ENCODE measurements at regions of chr10 and their contacts with region 1.

Region 1: GRCh38 chr10:96129387-96130325 is at the start of gene ZNF518A:
- DNase-seq: peak; percentile 96
- H3K4me3 Mint-ChIP-seq: peak within 1 kb of the TSS; percentile 94
- H3K27ac Mint-ChIP-seq: peak within 1 kb of the TSS; percentile 98
- H3K4me1 Mint-ChIP-seq: peaks cover 23% of the 10 kb centered on the region
- H3K27me3 Mint-ChIP-seq: peaks cover 28% of the 10 kb centered on the region
- total RNA-seq, gene ZNF518A: 16.9 and 17.2 TPM in 2 replicates

Region 2: GRCh38 chr10:95907456-95908253 is 222.0 kb before region 1 on chr10 and contains the start of gene CC2D2B:
- intact Hi-C with region 1: loop called (anchors 5 kb)
- DNase-seq: peak; percentile 91
- H3K4me3 Mint-ChIP-seq: peak within 1 kb of the TSS; percentile 93
- H3K27ac Mint-ChIP-seq: peak within 1 kb of the TSS; percentile 94
- H3K4me1 Mint-ChIP-seq: peaks cover 11% of the 10 kb centered on the region
- H3K27me3 Mint-ChIP-seq: peaks cover 14% of the 10 kb centered on the region
- total RNA-seq, gene CC2D2B: 0.26 TPM in 1 of 2 replicates, not detected in the other

Region 3: DNA sequence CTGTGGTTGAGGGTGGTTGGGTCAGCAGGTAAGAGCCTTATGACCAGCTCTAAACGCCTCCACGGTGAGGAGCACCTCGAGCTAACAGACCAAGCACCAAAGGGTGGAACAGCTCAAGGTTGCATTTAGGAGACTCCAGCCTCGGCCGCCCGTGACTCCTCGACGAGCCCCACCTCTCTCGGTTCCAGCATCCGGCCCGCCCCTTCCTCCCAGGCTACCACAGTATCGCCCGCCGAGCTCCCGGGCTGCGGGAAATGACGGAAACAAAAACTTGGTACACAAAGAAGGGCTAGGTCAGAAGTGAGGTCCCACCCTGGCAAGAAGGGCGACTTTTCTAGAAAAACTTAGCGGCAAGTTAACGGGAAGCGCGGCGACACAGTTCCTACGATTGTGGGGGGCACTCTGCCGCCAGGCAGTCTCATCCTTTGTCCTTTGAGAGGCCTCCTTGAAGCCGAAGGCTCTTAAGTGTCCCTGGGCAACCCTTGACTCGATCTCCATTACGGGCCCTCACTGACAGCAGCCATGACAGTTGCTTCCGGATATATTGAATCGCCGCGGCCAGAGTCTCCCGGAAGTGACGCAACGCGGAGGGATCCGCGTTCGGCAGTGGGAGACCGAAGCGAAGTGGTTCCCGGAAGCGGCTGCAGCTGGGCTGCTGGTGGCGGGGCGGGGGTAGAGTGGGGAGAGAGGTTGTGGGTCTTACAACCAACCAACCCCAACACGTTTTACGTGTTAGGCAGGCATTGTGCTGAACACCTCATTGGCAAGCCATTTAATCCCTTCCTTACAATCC is 39.8 kb before region 1 on chr10:
- intact Hi-C with region 1: loop called (anchors 1 kb)
- DNase-seq: peak; percentile 97
- H3K4me3 Mint-ChIP-seq: peak overlapping the region; percentile 95
- H3K27ac Mint-ChIP-seq: peak overlapping the region; percentile 99
- H3K4me1 Mint-ChIP-seq: peaks cover 12% of the 10 kb centered on the region
- H3K27me3 Mint-ChIP-seq: peaks cover 17% of the 10 kb centered on the region

Measured in activated CD4-positive, alpha-beta T cell treated with anti-CD3 and anti-CD28 coated beads, Interleukin-2, amount 10 ng/mL, durations not matched to agents 24 days and 14 days (primary cell).